Right cardiac atrium (tissue), 5 donors: ENCODE measurements at regions of chr12 and their contacts with region 1.

Region 1: GRCh38 chr12:98397316-98398105 is 117.9 kb upstream of the TMPO start:
- DNase-seq: peak; percentile 77 to 91 (median 89)
- ATAC-seq: peak; percentile 96
- H3K4me3 ChIP-seq: peak overlapping the region; percentile 82
- H3K27ac ChIP-seq: no peak overlapping the region
- H3K4me1 ChIP-seq: no peaks in the 10 kb centered on the region
- H3K27me3 ChIP-seq: no peaks in the 10 kb centered on the region

Region 2: GRCh38 chr12:96578526-96579125 is 1818.9 kb before region 1 on chr12:
- intact Hi-C with region 1: loop called in 3 of 4 experiments (anchors 5 to 10 kb)
- DNase-seq: no peak
- ATAC-seq: peak; percentile 51
- H3K4me3 ChIP-seq: no peak overlapping the region
- H3K27ac ChIP-seq: no peak overlapping the region
- H3K4me1 ChIP-seq: no peaks in the 10 kb centered on the region
- H3K27me3 ChIP-seq: no peaks in the 10 kb centered on the region

Region 3: GRCh38 chr12:98174428-98174809 is 223.1 kb before region 1 on chr12:
- intact Hi-C with region 1: no loop called
- DNase-seq: no peak
- ATAC-seq: no peak
- H3K4me3 ChIP-seq: no peak overlapping the region
- H3K27ac ChIP-seq: no peak overlapping the region
- H3K4me1 ChIP-seq: no peaks in the 10 kb centered on the region
- H3K27me3 ChIP-seq: no peaks in the 10 kb centered on the region

Region 4: DNA sequence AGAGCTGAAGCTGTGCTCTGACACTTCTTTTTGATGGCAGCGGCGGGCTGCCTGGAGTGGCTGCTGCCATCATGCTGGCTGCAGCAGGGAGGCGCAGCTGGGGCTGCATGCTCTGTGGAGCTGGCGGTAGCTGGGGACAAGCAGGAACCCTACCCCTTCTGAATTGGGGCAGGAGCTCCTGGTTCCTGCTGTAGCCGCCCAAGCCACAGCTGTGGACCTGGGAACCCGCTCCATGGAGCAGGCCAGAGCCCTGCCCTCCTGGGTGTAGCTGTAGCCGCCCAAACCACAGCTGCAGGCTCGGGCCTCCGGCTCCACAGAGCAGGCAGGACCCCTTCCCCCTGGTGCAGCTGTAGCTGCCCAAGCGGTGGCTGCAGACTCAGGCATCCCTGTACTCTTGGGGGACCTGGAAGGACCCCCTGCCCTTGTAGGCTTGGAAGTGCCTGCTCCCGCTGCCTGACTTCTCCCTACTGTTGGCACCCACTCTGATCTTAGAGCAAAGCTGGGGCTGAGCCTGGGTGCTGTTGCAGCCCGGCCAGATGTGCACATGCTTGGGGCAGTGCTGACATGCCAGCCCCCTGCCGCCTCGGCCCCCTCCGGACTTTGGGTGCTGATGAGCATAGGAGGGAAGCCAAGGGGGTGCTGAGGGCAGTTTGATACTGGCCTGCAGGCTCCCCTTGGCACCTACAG is 280.9 kb after region 1 on chr12:
- intact Hi-C with region 1: no loop called
- DNase-seq: no peak
- ATAC-seq: peak in 1 of 2 donors; percentile 29
- H3K4me3 ChIP-seq: no peak overlapping the region
- H3K27ac ChIP-seq: no peak overlapping the region
- H3K4me1 ChIP-seq: no peaks in the 10 kb centered on the region
- H3K27me3 ChIP-seq: no peaks in the 10 kb centered on the region